ENCODE measurements at regions of chrX and their contacts with region 1.

Region 1: GRCh38 chrX:68196939-68197791 is 236.1 kb downstream of the OPHN1 start:
- DNase-seq: no peak
- H3K4me3 ChIP-seq: no peak overlapping the region
- H3K27ac ChIP-seq: no peak overlapping the region
- H3K4me1 ChIP-seq: no peaks in the 10 kb centered on the region
- H3K27me3 ChIP-seq: no peaks in the 10 kb centered on the region
- CTCF ChIP-seq: peak; percentile 41 to 68 (median 48)

Region 2: GRCh38 chrX:68462653-68463052 is 265.5 kb after region 1 on chrX:
- intact Hi-C with region 1: loop called (anchors 5 kb)
- DNase-seq: no peak
- H3K4me3 ChIP-seq: no peak overlapping the region
- H3K27ac ChIP-seq: no peak overlapping the region
- H3K4me1 ChIP-seq: no peaks in the 10 kb centered on the region
- H3K27me3 ChIP-seq: no peaks in the 10 kb centered on the region
- CTCF ChIP-seq: peak; percentile 19 to 49 (median 42)

Region 3: GRCh38 chrX:68511255-68511654 is 314.1 kb after region 1 on chrX:
- intact Hi-C with region 1: no loop called
- DNase-seq: no peak
- H3K4me3 ChIP-seq: no peak overlapping the region
- H3K27ac ChIP-seq: no peak overlapping the region
- H3K4me1 ChIP-seq: no peaks in the 10 kb centered on the region
- H3K27me3 ChIP-seq: no peaks in the 10 kb centered on the region
- CTCF ChIP-seq: peak; percentile 45 to 79 (median 70)